ENCODE measurements at regions of chr17 and their contacts with region 1.

Region 1: DNA sequence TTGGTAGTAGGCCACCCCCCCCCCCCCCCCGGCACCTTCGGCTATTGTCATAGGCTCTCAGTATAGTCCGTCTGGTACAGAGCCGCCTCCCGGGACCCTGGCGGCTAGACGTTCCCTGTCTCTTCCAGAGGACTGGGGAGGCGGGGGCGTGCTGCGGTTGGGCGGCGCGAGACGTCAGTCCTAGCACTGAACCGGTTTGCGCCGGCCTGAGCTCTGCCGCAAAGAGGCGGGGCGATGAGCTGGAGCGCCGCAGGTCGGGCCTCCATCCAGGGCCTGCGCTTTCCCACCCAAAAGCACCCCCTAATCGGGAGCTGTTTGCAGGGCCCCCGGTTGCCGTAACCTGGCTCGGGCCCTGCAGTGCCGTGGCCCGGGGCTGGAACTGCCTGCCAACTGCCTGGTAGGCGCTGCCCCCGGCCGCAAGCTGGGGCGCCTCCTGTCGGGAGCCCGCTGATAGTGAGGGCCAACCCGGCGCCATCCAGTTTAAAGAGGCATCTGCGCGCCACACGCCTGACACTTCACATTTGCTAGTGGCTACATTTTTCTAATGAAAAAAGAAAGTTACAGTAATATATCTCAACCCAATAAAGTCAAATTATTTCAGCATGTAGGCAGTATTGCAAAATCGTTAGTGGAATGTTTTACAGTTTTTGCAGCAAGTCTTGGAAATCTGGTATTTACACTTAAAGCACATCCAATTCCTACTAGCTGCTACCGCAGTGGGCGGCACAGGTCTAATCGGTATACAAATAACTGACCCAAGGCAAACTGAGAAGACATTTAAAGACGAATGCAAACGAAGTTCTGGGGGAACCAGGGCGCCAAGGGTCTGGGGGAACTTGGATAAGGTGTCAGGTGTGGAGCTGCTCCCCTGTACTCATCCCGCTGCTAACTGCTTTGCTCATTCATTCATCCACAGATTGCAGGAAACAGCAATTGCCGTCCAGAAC is 748 bp upstream of the USP22 start:
- DNase-seq: peak; percentile 99
- ATAC-seq: peak; percentile 97

Region 2: DNA sequence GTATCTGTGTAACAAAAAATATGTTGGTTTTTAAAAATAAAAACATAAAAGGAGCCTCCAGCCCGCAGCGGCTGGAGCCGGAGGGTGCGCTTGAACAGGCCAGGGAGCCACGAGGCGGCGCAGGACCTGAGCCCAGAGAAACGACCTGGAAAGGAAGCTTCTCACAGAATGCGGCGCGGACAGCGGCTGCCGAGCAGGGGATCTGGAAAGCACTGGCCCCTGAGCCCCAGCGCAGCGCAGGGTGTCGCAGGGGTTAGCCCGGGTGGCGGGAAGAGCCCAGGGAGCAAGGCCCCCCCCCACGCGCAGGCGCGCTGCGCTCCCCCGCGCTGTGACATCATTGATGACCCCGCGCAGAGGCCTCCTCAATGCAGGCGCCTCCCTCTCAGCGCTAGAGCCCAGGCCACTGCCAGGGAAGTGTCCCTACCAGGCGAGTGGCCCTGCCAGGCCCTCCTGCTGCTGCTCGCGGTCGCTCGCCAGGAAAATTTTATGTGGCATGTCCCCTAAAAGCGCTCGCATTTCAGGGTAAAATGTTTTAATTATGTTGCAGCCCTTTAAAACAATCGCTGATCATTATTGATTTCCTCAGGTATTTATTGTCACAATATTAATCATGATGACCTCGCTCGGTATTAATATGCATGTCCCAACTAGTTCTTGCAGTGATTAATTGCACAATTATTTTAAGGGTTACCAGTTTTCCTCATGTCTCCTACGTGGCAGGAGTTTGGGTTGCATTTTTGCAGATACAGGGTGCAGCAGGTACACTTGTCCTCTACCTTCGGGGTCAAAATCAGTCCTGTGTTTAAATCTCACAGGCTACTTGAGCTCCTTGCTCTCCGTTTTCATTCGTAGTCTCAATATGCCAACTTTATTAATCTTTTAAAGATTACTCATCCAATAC is 134.9 kb before region 1 on chr17:
- intact Hi-C with region 1: loop called (anchors 1 kb)
- DNase-seq: peak; percentile 94
- ATAC-seq: peak; percentile 100

Region 3: DNA sequence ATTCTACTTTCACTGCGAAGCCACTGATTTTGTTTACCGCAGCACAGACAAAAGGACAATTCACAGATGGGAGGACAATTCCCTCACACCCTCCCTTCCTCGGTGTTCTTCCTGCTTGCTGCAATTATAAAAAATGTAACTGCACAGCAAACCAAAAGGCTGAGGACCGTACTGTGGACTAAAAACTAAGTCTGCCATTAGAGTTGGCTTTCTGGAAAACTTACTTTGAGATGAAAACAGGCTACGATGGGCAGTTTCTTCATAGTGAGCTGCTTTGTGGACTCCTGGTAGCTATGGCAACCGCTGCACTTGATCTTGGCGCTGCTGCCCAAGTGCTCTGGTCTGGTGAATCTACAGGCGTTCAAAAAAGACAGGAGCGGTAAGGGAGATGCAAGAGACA is 35.9 kb before region 1 on chr17:
- intact Hi-C with region 1: loop called (anchors 5 kb)
- DNase-seq: no peak
- ATAC-seq: no peak

Region 4: DNA sequence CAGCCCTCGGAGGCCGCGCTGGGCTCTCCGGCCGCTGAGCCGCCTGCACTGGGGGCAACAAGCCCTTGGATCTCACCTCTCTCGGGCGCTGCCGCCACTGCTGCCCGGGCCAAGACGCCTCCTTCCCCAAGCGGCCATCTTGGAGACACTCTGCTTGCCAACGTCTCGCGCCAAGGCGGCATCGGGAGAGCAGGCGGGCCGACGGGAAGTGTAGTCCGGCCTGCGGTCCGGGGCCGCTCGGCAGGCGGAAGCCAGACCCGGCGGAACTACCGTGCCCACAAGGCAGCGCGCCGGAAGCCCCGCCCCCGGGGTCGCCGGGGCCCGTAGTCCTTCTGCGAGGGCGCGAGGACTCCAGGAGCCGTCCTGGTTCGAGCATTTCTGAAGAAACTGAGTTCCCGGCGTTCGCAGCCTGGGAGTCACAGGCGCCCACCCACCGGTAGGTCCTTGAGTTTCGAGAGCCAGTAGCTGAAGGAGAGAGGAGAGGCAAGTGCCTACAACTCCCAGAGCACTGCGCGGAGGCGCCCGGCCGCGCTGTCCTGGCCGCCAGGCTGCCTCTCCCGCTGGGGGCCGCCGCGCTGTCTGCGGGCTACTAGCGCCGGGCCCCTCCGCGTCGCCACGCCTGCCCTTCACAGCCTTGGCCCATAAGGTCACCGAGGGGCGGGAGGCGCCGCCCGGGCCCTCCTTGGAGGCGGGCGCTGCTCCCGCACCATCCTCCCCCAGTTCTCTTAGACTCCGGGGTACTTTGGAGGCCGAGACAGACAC is 170.6 kb after region 1 on chr17 and contains the start of gene TMEM11:
- intact Hi-C with region 1: loop called (anchors 5 kb)
- DNase-seq: peak; percentile 99
- ATAC-seq: peak; percentile 96
- total RNA-seq, gene TMEM11: 35.3 TPM

Measured in Right ventricle myocardium inferior (tissue), 1 donor.